T-cell (primary cell): ENCODE measurements at regions of chr11 and their contacts with region 1.

Region 1: DNA sequence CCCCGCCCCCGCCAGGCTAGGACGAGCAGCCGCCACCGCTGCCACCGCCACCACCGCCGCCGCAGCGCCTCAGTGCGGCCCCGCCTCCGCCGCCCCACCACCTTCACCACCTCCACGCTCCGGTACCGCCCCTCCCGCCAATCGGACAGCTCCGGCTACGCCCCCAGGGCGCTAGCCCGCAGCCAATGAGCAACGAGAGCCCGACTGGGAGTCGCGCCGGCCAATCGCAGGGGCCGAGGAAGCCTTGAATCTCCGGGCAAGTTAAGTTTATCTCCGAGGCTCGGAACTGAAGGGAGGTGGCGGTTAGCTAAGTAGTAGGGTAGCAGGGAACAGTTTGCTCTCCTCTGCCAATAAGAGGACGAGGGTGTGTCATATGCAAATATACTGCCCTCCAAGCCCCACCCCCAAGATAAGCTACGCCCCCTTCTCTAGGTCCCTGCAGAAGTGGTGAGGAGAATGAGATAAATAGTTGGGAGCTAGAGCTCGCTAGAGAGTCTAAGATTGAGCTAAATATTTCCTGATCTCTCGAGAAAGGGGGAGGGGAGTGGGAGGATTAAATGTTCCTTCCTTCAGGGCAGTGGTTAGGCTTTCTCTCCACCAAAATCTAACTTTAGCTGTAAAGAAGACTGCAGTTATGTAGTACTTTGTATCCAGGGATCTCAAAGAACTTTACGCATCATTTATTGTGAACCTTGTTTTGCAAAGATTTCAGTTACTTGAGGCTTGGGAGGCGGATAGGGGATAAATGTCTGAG is at the start of gene SESN3:
- DNase-seq: peak; percentile 95 to 99 (median 99)
- ATAC-seq: peak; percentile 86 to 90 (median 88)
- H3K4me3 ChIP-seq: peak within 1 kb of the TSS; percentile 84 to 86
- H3K4me3 Mint-ChIP-seq: peak within 1 kb of the TSS in 1 of 3 donors; percentile 93
- H3K27ac ChIP-seq: peak within 1 kb of the TSS; percentile 85
- H3K27ac Mint-ChIP-seq: peak within 1 kb of the TSS; percentile 83 to 88
- H3K4me1 ChIP-seq: peaks cover 12 to 30% of the 10 kb centered on the region in 2 experiments
- H3K4me1 Mint-ChIP-seq: peaks cover 58 to 68% (median 61%) of the 10 kb centered on the region in 3 donors
- H3K27me3 ChIP-seq: no peaks in the 10 kb centered on the region
- H3K27me3 Mint-ChIP-seq: no peaks in the 10 kb centered on the region
- total RNA-seq, gene SESN3: 61.5 to 150 (median 132) TPM

Region 2: DNA sequence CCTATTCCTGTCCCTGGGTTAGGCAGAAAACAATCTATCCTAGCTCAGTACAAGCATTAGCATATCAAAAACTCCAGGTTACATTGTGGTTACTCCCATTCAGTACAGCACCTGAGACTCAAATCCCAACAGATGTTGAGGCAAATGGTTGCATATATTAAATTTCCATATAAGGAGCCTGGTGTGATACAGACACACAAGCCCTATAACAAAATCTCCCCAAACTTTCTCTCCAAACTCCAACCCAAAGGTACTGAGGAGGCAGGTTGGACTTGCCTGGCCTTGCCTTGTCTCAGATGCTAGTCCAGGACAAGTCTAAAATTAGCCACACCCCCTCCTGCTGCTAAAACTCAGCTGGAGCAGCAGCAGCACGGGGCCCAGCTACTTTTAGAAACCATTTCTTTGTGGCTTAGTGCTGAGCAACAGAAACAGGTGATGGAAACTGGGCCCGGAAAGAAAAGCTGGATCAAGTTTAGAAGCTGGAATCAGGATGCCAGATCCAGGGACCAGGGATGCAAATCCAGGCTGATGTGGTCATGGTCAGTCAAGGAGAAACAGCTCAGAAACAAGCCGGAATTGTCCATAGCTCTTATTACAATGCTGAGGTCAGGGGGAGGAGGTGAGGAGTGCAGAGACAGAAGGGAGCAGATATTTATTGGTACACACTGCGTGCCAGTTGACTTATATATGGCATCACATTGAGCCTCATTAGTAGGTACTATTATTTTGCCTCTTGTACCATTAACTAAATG is 536.8 kb before region 1 on chr11:
- CTCF ChIA-PET with region 1: no interaction called
- POLR2A ChIA-PET with region 1: no interaction called
- DNase-seq: no peak
- ATAC-seq: no peak
- H3K4me3 ChIP-seq: no peak overlapping the region
- H3K4me3 Mint-ChIP-seq: no peak overlapping the region
- H3K27ac ChIP-seq: no peak overlapping the region
- H3K27ac Mint-ChIP-seq: no peak overlapping the region
- H3K4me1 ChIP-seq: no peaks in the 10 kb centered on the region
- H3K4me1 Mint-ChIP-seq: no peaks in the 10 kb centered on the region
- H3K27me3 ChIP-seq: peaks cover 0 to 3% of the 10 kb centered on the region in 2 experiments
- H3K27me3 Mint-ChIP-seq: peaks cover 16 to 21% of the 10 kb centered on the region in 2 donors

Region 3: DNA sequence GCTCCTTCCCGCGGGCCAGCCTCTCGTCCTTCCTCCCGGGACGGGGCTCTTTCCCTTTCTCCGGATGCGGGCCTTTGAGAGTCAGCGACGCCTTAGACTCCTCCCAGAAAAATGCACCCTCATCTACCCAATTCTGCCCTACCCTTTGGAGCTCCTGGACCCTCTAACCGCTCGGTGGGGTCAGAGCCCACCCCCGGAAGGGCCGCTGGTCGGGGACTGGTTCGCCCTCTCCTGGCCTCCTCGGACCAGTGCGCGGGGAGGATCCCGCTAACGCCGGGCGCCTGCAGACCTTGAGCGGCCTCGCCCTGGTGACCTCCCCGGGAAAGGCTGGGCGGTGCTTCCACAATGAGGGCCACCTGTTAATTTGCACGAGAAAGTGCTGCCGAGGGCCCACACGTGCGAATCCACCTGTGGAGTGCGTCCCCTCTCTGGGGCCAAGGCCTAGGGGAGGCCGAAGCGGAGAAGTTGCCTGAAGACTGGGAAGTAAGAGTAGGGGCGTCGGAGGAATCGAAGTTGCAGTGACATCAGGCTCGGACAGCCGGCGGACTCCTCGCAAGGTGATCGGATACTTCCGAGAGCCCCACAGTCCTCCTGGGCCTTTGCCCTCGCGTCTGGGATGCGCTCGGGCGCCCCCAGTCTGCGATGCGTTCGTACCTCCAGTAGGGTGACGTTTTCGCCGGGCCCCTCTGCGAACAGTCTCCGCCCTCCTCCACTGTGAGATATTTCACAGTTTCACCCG is 80.2 kb before region 1 on chr11:
- CTCF ChIA-PET with region 1: interaction called, 5 to 38 read pairs
- POLR2A ChIA-PET with region 1: interaction called in 1 of 2 experiments, 4 read pairs
- DNase-seq: peak; percentile 79 to 96 (median 89)
- ATAC-seq: peak; percentile 90 to 94 (median 92)
- H3K4me3 ChIP-seq: peak overlapping the region; percentile 90 to 92
- H3K4me3 Mint-ChIP-seq: peak overlapping the region; percentile 82 to 91 (median 84)
- H3K27ac ChIP-seq: peak overlapping the region; percentile 87
- H3K27ac Mint-ChIP-seq: peak overlapping the region; percentile 99
- H3K4me1 ChIP-seq: peaks cover 11 to 43% of the 10 kb centered on the region in 2 experiments
- H3K4me1 Mint-ChIP-seq: peaks cover 35 to 40% (median 39%) of the 10 kb centered on the region in 3 donors
- H3K27me3 ChIP-seq: peaks cover 0 to 11% of the 10 kb centered on the region in 2 experiments
- H3K27me3 Mint-ChIP-seq: peaks cover 6% of the 10 kb centered on the region in 2 donors

Region 4: DNA sequence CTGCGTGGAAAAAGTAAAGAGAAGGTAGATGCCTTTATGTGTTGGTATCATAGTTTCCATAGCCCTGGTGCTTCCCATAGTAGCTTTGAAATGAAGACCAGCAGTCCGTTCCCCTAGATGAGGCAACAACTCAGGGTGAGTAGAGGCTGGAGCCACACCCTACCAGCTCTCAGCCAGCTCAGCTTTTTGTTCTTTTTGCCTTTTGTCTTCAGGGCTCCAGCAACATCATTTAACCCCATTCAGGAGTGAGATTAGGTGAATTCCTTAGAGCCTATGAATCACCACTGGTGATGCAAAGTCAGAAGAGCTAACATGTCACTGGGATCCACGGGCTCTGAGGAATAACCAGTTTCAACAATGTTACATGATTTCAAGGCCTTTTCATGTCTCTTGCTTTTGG is 13.7 kb after region 1 on chr11:
- CTCF ChIA-PET with region 1: interaction called, 4 to 9 read pairs
- POLR2A ChIA-PET with region 1: interaction called, 3 to 10 read pairs
- DNase-seq: no peak
- ATAC-seq: no peak
- H3K4me3 ChIP-seq: no peak overlapping the region
- H3K4me3 Mint-ChIP-seq: no peak overlapping the region
- H3K27ac ChIP-seq: no peak overlapping the region
- H3K27ac Mint-ChIP-seq: no peak overlapping the region
- H3K4me1 ChIP-seq: no peaks in the 10 kb centered on the region
- H3K4me1 Mint-ChIP-seq: peaks cover 0 to 8% (median 0%) of the 10 kb centered on the region in 3 donors
- H3K27me3 ChIP-seq: no peaks in the 10 kb centered on the region
- H3K27me3 Mint-ChIP-seq: peaks cover 0 to 2% of the 10 kb centered on the region in 2 donors

Region 5: DNA sequence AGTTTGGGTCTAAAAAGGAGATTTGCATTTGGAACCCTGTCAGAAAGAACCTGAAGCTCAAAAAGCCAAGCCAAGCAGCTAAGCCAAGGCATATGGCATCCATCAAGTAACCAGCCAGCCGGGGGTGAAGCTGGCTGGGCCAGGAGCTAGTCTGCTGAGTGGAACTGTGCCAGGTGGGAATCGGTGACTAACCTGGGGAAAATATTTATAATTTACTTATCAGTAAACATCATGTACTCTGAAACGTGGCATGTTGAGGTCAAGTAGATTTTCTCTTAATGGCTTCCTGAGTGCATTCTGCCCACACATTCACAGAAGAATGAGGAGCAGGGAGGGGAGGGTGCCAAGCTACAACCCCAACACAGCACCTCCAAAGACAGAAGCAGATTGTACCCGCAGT is 70.2 kb after region 1 on chr11:
- CTCF ChIA-PET with region 1: interaction called in 1 of 2 experiments, 3 read pairs
- POLR2A ChIA-PET with region 1: interaction called in 1 of 2 experiments, 11 read pairs
- DNase-seq: no peak
- ATAC-seq: no peak
- H3K4me3 ChIP-seq: no peak overlapping the region
- H3K4me3 Mint-ChIP-seq: no peak overlapping the region
- H3K27ac ChIP-seq: no peak overlapping the region
- H3K27ac Mint-ChIP-seq: no peak overlapping the region
- H3K4me1 ChIP-seq: peaks cover 17 to 19% of the 10 kb centered on the region in 2 experiments
- H3K4me1 Mint-ChIP-seq: peaks cover 25 to 38% (median 27%) of the 10 kb centered on the region in 3 donors
- H3K27me3 ChIP-seq: no peaks in the 10 kb centered on the region
- H3K27me3 Mint-ChIP-seq: no peaks in the 10 kb centered on the region

Region 6: DNA sequence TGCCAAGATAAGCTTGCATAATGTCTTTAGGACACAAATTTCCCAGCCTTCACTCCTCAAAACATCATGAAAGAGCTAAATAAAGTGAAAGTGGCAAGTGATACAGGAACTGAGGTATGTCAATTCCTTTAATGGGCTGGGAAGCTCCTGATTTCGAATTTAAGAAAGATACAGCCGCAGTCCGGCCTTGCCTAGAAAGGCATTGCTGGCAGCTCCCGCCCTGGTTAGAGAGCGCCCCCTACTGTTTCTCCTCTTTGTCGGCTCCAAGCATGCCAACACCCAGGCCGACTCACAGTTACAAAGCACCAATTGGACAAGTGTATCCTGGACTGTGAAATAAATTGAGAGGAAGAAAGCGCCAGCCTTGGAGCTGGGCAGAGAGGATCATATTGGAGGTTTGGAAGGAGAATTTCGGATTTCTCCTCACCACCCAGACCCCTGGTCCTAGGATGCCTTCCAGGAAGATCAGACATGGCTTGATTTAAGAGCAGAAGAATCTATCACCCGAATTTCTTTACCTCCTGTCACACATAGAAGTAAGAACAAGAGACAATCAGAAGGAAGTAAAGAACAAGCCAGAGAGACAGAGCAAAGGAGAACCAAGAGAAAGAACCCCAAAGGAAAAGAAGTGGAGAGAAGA is 474.3 kb after region 1 on chr11:
- CTCF ChIA-PET with region 1: interaction called, 6 to 31 read pairs
- POLR2A ChIA-PET with region 1: interaction called, 4 to 5 read pairs
- DNase-seq: peak; percentile 68 to 93 (median 82)
- ATAC-seq: peak; percentile 89 to 95 (median 92)
- H3K4me3 ChIP-seq: no peak overlapping the region
- H3K4me3 Mint-ChIP-seq: no peak overlapping the region
- H3K27ac ChIP-seq: peak overlapping the region; percentile 48
- H3K27ac Mint-ChIP-seq: no peak overlapping the region
- H3K4me1 ChIP-seq: peaks cover 0 to 28% of the 10 kb centered on the region in 2 experiments
- H3K4me1 Mint-ChIP-seq: peaks cover 9% of the 10 kb centered on the region in 3 donors
- H3K27me3 ChIP-seq: no peaks in the 10 kb centered on the region
- H3K27me3 Mint-ChIP-seq: peaks cover 2 to 3% of the 10 kb centered on the region in 2 donors